Ascending aorta (tissue), 2 donors: ENCODE measurements at regions of chr20 and their contacts with region 1.

Region 1: DNA sequence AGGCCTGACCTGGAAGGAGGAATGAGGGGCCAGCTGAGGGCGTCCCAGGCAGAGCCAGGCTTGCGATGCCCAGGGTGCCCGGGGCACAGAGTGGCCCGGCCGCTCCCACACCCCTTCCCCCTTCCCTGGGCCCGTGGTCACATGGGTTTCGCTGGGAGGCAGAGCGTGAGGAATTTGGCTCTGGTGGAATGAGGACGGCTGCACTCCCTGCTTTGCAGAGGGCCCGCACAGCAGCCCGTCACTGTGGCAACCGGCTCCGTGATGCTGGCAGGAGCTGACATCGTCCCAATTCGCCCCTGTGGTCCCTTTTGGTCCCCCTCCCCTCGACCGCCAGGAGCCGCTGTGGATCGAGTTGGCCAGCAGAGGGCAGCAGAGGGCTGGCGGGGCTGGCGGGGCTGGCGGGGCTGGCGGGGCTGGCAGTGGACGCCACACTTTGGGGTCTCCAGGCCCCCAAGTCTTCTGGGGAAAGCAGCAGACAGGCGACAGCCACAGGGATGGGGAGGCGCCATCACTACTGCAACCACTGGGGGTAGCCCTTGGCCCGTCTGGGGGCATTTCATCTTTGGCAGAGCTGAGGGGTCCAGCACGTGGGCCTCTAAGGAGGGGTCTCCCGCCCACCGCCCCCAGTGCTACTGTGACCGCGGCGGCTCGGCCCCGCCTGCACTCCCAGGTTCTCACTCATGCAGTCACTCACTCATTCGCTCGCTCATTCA is 49.6 kb upstream of the BHLHE23 start:
- DNase-seq: peak in 1 of 2 donors; percentile 56
- H3K4me3 ChIP-seq: no peak overlapping the region
- H3K27ac ChIP-seq: no peak overlapping the region
- H3K4me1 ChIP-seq: peaks cover 0 to 5% of the 10 kb centered on the region in 2 donors
- H3K27me3 ChIP-seq: no peaks in the 10 kb centered on the region
- CTCF ChIP-seq: peak; percentile 70 to 93 (median 79)

Region 2: GRCh38 chr20:63178889-63179686 is 122.7 kb after region 1 on chr20:
- intact Hi-C with region 1: loop called (anchors 2 kb)
- DNase-seq: no peak
- H3K4me3 ChIP-seq: peak overlapping the region; percentile 26 to 54
- H3K27ac ChIP-seq: no peak overlapping the region
- H3K4me1 ChIP-seq: peaks cover 6 to 13% of the 10 kb centered on the region in 2 donors
- H3K27me3 ChIP-seq: peaks cover 52% of the 10 kb centered on the region
- CTCF ChIP-seq: peak; percentile 8 to 53 (median 10)

Region 3: GRCh38 chr20:63230800-63231268 is 174.4 kb after region 1 on chr20:
- intact Hi-C with region 1: loop called (anchors 5 kb)
- DNase-seq: no peak
- H3K4me3 ChIP-seq: no peak overlapping the region
- H3K27ac ChIP-seq: no peak overlapping the region
- H3K4me1 ChIP-seq: no peaks in the 10 kb centered on the region
- H3K27me3 ChIP-seq: peaks cover 3% of the 10 kb centered on the region
- CTCF ChIP-seq: peak in 2 of 3 experiments; percentile 24 to 50